ENCODE measurements at regions of chr9 and their contacts with region 1.

Region 1: GRCh38 chr9:35945341-35946018 is 12.5 kb downstream of the OR2S2 start:
- DNase-seq: peak; percentile 27
- ATAC-seq: peak; percentile 47
- H3K4me3 Mint-ChIP-seq: no peak overlapping the region
- H3K27ac Mint-ChIP-seq: no peak overlapping the region
- H3K4me1 Mint-ChIP-seq: peaks cover 3% of the 10 kb centered on the region
- H3K27me3 Mint-ChIP-seq: peaks cover 21% of the 10 kb centered on the region
- CTCF ChIP-seq: peak; percentile 67

Region 2: DNA sequence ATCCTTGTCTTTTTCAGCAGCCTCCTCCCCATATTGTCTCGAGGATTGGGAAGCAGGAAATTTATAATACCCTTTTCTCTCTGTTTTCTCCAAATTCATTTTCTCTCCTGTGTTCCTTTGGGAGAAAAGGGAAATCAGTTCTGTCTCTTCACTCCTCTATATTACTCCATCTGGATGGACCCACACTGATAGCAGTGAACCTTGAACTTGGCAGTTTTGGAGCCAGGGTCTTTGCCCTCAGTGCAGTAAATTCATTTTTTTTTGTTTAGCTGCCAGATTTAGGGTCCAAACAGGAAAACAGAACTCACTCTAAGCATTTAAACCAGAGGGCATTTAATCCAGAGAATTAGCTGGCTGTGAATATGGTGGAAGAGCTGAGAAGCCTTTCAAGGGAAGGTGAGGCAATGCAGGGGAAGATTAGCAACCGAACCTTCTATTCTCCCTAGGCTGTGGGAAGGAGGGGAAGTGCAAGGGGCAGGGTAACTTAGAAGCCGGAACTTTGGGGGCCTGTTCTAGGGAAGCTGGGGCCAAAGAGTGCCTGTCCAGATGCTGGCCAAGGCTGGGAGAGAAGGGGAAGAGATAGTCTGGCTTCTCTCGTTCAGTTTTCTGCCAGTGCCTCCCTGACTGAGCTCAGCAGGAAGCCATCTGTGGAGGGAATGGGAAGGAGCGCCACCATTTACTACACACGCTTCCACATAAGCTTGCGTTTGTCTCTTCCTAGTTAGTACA is 170.4 kb before region 1 on chr9:
- CTCF ChIA-PET with region 1: no interaction called
- POLR2A ChIA-PET with region 1: no interaction called
- intact Hi-C with region 1: no loop called
- DNase-seq: no peak
- ATAC-seq: no peak
- H3K4me3 Mint-ChIP-seq: no peak overlapping the region
- H3K27ac Mint-ChIP-seq: peak overlapping the region; percentile 53
- H3K4me1 Mint-ChIP-seq: peaks cover 17% of the 10 kb centered on the region
- H3K27me3 Mint-ChIP-seq: no peaks in the 10 kb centered on the region
- CTCF ChIP-seq: no peak

Region 3: DNA sequence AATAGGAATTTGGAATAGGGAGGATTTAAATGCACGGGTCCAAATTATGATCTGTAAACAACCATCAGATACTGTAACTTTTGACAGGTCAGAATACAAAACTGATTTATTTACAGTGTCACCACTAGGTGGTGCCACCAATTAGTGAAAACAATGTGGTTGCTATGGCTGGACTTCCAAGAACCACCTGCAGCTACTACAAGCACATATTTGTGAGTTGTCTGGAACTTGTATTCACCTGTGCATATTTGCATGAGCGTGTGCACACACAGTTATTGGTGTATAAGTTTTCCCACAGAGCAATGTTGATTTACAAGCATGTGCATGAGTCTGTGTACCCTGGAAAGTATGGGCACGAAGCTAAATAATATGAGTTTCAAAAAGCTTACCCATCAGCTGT is 42.4 kb before region 1 on chr9:
- CTCF ChIA-PET with region 1: interaction called, 38 read pairs
- POLR2A ChIA-PET with region 1: no interaction called
- intact Hi-C with region 1: loop called (anchors 1 kb)
- DNase-seq: no peak
- ATAC-seq: peak; percentile 49
- H3K4me3 Mint-ChIP-seq: no peak overlapping the region
- H3K27ac Mint-ChIP-seq: no peak overlapping the region
- H3K4me1 Mint-ChIP-seq: no peaks in the 10 kb centered on the region
- H3K27me3 Mint-ChIP-seq: peaks cover 17% of the 10 kb centered on the region
- CTCF ChIP-seq: peak; percentile 79